ENCODE measurements at regions of chr22 and their contacts with region 1.

Region 1: GRCh38 chr22:50185384-50186087 is at the start of gene TRABD:
- DNase-seq: peak; percentile 78 to 96
- H3K4me3 ChIP-seq: peak within 1 kb of the TSS; percentile 42
- CTCF ChIP-seq: no peak
- POLR2A ChIP-seq: no peak
- total RNA-seq, gene TRABD: 31.5 to 62.7 (median 46.4) TPM

Region 2: GRCh38 chr22:49712195-49712791 is 473.2 kb before region 1 on chr22:
- intact Hi-C with region 1: no loop called
- DNase-seq: no peak
- H3K4me3 ChIP-seq: no peak overlapping the region
- CTCF ChIP-seq: no peak
- POLR2A ChIP-seq: no peak

Region 3: GRCh38 chr22:49790912-49791311 is 394.6 kb before region 1 on chr22:
- intact Hi-C with region 1: no loop called
- DNase-seq: no peak
- H3K4me3 ChIP-seq: no peak overlapping the region
- CTCF ChIP-seq: no peak
- POLR2A ChIP-seq: no peak

Region 4: GRCh38 chr22:49936018-49936952 is 249.3 kb before region 1 on chr22:
- intact Hi-C with region 1: loop called (anchors 10 kb)
- DNase-seq: peak; percentile 90 to 98
- H3K4me3 ChIP-seq: no peak overlapping the region
- CTCF ChIP-seq: peak in 1 of 3 donors; percentile 8
- POLR2A ChIP-seq: no peak

Region 5: GRCh38 chr22:50271519-50271970 is 86.0 kb after region 1 on chr22:
- intact Hi-C with region 1: no loop called
- DNase-seq: no peak
- H3K4me3 ChIP-seq: no peak overlapping the region
- CTCF ChIP-seq: no peak
- POLR2A ChIP-seq: no peak

Region 6: DNA sequence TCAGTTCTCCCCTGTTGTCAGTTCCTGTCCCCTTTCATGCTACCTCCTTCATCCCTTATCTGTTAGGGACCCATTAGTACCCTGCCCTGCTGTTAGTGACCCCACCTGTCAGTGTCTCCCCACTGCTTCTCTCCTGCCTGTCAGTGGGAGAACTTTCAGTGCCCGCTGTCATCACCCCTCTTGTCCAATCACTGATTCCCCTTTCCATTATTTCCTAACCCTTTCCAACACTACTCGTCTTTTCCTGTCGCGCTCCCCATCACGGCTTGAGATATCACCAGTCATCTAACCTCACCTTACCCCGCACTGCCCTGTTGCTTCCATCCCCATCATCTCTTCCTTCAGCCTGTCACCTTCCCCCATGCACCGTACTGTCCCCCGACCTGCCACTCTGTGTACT is 161.6 kb after region 1 on chr22:
- intact Hi-C with region 1: no loop called
- DNase-seq: no peak
- H3K4me3 ChIP-seq: no peak overlapping the region
- CTCF ChIP-seq: no peak
- POLR2A ChIP-seq: no peak

Measured in lower leg skin (tissue), 4 donors.